ENCODE measurements at regions of chr6 and their contacts with region 1.

Region 1: GRCh38 chr6:12637960-12638641 is 78.5 kb upstream of the PHACTR1 start:
- DNase-seq: peak; percentile 27
- ATAC-seq: peak; percentile 41 to 66

Region 2: DNA sequence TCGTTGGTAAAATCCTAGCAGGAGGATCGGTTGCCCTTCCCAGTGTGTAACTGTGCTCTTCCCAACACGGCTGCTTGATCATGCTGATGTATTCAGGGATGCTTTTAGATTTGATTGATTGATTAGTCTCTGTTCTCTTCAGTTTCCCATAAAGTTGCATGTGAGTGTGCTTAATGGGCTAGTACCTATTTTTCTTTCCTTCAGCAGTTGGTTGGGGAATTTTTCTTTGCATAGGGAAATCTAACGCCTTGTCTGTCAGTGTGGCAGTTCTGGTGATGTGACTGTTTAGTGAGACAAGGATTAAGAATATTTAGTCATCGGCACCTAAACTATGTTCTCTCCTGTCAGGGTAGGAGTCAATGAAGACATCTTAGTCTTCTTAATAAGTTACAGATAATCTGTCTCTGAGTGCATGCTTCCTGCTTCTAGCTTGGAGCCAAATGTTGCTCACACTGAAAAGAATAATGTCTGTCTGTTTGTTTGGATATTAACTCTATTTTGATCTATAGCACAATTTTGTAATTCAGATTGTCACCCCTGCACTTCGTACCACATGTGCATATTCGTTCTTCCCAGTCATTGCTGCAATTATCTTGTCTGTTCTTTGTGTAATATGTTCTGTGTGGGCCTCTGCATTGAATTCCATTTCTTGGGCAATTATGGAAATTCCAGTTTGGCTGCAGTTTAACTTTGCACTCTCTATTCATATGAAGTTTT is 178.0 kb before region 1 on chr6:
- intact Hi-C with region 1: no loop called
- DNase-seq: no peak
- ATAC-seq: no peak

Region 3: GRCh38 chr6:12595161-12595811 is 42.8 kb before region 1 on chr6:
- intact Hi-C with region 1: no loop called
- DNase-seq: no peak
- ATAC-seq: peak; percentile 12 to 80

Region 4: DNA sequence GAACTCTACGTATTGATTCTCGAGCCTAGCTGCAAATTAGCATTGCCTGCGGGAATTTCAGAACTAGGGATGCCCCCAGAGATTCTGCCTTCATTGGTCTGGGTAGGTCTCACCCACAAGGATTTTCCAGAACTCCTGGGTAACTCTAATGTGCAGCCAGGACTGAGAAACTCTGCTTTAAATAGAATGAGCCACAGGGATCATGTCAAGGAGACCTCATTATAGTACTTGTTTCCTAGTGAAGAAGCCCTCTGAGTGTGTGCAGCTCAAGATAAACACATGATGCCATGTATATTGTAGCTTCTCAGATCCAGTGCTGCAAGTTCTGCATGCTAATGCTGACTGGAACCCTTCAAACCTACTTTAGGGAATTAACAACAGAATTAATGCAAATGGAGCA is 257.6 kb after region 1 on chr6:
- intact Hi-C with region 1: loop called in 1 of 2 experiments (anchors 2 kb)
- DNase-seq: no peak
- ATAC-seq: no peak